CD8-positive, alpha-beta T cell (primary cell): ENCODE measurements at regions of chr14 and their contacts with region 1.

Region 1: DNA sequence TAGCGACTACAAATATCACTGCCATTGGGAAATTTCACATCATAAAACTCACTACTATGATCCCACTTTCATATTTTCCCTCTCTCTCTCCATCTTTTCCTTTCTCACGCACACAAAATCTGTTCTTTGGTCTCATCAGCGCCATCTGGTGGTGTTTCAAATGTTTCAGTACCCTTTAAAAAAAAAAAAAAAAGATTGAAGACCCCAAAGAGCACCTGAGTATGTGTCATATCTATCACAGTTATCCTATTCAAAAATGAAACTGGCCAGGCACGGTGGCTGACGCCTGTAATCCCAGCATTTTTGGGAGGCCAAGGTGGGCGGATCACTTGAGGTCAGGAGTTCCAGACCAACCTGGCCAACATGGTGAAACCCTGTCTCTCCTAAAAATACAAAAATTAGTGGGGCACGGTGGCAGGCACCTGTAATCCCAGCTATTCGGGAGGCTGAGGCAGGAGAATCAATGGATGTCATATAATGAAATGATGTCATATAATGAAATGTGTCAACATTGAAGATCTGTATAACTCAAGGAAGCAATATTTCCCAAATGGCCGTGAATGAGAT is 72.4 kb downstream of the TTC9 start:
- DNase-seq: peak in 8 of 9 experiments; percentile 29 to 82 (median 60)
- ATAC-seq: peak; percentile 36
- H3K4me3 ChIP-seq: no peak overlapping the region
- H3K4me3 Mint-ChIP-seq: no peak overlapping the region
- H3K27ac ChIP-seq: no peak overlapping the region
- H3K27ac Mint-ChIP-seq: no peak overlapping the region
- H3K4me1 ChIP-seq: peaks cover 3% of the 10 kb centered on the region
- H3K4me1 Mint-ChIP-seq: peaks cover 4% of the 10 kb centered on the region
- H3K27me3 ChIP-seq: no peaks in the 10 kb centered on the region
- H3K27me3 Mint-ChIP-seq: peaks cover 3% of the 10 kb centered on the region
- CTCF ChIP-seq: peak; percentile 95

Region 2: DNA sequence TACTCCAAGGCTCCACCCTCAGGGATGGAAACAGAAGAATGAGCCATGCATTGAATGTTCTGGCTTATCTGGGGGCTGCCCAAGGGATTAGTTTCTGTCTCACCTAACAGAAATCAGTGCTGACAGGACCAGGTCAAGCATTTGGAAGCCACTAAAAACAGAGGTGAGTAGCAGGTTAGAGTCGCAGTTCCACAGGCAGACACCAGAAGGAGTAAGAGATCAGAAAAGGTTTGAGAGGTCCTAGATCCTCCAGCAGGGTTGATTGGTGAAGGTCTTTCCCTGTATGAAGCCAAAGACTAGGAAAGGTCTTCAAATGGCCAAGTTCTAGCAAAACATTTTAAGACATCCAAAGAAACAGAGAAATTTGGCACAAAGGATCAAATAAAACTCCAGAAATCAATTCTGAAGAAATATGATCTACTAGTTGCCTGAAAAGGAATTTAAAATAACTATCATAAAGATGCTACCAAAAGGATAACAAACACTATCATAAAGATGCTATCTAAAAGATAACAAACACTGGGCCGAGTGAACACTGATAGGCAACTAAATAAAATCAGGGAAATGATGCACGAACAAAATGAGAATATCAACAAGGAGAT is 91.9 kb before region 1 on chr14:
- CTCF ChIA-PET with region 1: interaction called, 135 read pairs
- POLR2A ChIA-PET with region 1: interaction called, 3 read pairs
- intact Hi-C with region 1: loop called (anchors 1 kb)
- DNase-seq: peak in 8 of 9 experiments; percentile 31 to 73 (median 62)
- ATAC-seq: peak; percentile 96
- H3K4me3 ChIP-seq: no peak overlapping the region
- H3K4me3 Mint-ChIP-seq: no peak overlapping the region
- H3K27ac ChIP-seq: no peak overlapping the region
- H3K27ac Mint-ChIP-seq: no peak overlapping the region
- H3K4me1 ChIP-seq: no peaks in the 10 kb centered on the region
- H3K4me1 Mint-ChIP-seq: peaks cover 3% of the 10 kb centered on the region
- H3K27me3 ChIP-seq: peaks cover 0 to 2% of the 10 kb centered on the region in 2 experiments
- H3K27me3 Mint-ChIP-seq: no peaks in the 10 kb centered on the region
- CTCF ChIP-seq: peak; percentile 93

Region 3: DNA sequence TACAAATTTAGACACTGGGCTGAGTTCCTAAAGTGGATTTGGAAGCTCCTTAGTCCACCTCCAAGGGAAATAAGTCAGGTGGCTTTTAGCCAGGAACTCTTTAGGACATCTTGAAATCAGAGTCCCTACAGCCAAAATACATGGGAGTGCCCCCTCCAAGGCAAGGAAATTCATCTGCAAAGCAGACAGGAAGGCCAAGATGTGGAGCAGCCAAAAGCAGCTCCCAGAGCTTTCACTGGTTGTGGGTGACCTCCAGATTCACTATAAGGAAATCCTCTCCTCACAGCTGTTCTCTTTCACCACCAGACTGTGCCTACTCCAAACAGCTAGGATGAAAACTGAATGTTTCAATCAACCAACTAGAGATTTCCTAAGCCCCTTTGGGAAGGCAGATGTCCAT is 65.8 kb before region 1 on chr14:
- CTCF ChIA-PET with region 1: interaction called, 15 read pairs
- POLR2A ChIA-PET with region 1: interaction called, 3 read pairs
- intact Hi-C with region 1: no loop called
- DNase-seq: no peak
- ATAC-seq: no peak
- H3K4me3 ChIP-seq: no peak overlapping the region
- H3K4me3 Mint-ChIP-seq: no peak overlapping the region
- H3K27ac ChIP-seq: no peak overlapping the region
- H3K27ac Mint-ChIP-seq: peak overlapping the region; percentile 43
- H3K4me1 ChIP-seq: peaks cover 79% of the 10 kb centered on the region
- H3K4me1 Mint-ChIP-seq: peaks cover 90% of the 10 kb centered on the region
- H3K27me3 ChIP-seq: no peaks in the 10 kb centered on the region
- H3K27me3 Mint-ChIP-seq: no peaks in the 10 kb centered on the region
- CTCF ChIP-seq: no peak

Region 4: GRCh38 chr14:70660949-70661893 is 52.9 kb before region 1 on chr14:
- CTCF ChIA-PET with region 1: interaction called, 38 read pairs
- POLR2A ChIA-PET with region 1: interaction called, 3 read pairs
- intact Hi-C with region 1: loop called (anchors 1 to 2 kb)
- DNase-seq: peak; percentile 25 to 84 (median 65)
- ATAC-seq: peak; percentile 76
- H3K4me3 ChIP-seq: peak overlapping the region in 1 of 2 experiments; percentile 18
- H3K4me3 Mint-ChIP-seq: peak overlapping the region; percentile 78
- H3K27ac ChIP-seq: peak overlapping the region; percentile 44 to 50
- H3K27ac Mint-ChIP-seq: peak overlapping the region; percentile 89
- H3K4me1 ChIP-seq: peaks cover 87% of the 10 kb centered on the region
- H3K4me1 Mint-ChIP-seq: peaks cover 92% of the 10 kb centered on the region
- H3K27me3 ChIP-seq: no peaks in the 10 kb centered on the region
- H3K27me3 Mint-ChIP-seq: no peaks in the 10 kb centered on the region
- CTCF ChIP-seq: no peak

Region 5: GRCh38 chr14:70809543-70810244 is 95.6 kb after region 1 on chr14:
- CTCF ChIA-PET with region 1: interaction called, 3 read pairs
- POLR2A ChIA-PET with region 1: no interaction called
- intact Hi-C with region 1: loop called in 1 of 2 experiments (anchors 2 kb)
- DNase-seq: peak; percentile 70 to 95 (median 87)
- ATAC-seq: peak; percentile 79
- H3K4me3 ChIP-seq: peak overlapping the region; percentile 58 to 65
- H3K4me3 Mint-ChIP-seq: no peak overlapping the region
- H3K27ac ChIP-seq: peak overlapping the region; percentile 30 to 56
- H3K27ac Mint-ChIP-seq: peak overlapping the region; percentile 80
- H3K4me1 ChIP-seq: peaks cover 12% of the 10 kb centered on the region
- H3K4me1 Mint-ChIP-seq: peaks cover 10% of the 10 kb centered on the region
- H3K27me3 ChIP-seq: no peaks in the 10 kb centered on the region
- H3K27me3 Mint-ChIP-seq: no peaks in the 10 kb centered on the region
- CTCF ChIP-seq: no peak

Region 6: DNA sequence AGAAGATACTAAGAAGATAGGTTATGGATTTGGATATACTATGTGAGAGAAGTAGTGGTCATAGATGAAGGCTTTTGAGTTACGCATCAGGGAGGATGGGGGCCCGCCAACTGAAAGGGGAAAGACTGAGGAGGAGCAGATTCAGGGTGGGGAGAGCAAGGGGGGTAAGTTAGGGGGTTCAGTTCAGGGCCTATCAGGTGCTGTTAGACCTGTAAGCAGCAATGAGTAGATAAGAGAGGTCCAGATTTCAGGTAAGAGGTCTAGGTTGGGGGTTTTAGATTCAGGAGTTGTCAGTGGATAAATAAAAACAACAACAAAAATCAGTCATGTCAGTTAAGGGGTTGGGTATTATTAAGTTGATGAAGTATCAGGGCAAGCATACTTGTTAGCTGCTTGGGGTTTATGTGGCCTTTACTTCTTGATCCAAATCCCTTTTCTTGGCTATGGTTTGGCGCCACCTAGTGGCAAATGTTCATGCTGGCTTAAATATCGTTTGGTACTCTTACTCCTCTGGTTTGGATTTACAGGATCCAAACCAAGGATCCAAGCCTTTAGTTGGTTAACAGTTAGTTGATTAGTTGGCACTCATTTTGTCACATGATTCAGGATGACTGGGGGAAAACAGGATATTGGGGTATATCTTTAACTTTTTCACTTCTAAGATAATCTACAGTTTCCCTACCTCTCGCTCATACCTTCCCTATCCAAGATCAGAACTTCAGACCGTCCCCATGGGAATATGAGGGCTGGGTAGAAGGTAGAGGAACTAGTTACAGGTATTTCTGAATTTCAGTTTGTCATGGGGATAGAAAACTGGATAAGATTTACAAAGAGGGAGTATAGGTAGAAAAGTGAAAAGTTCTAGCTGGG is 258.2 kb after region 1 on chr14:
- CTCF ChIA-PET with region 1: interaction called, 3 read pairs
- POLR2A ChIA-PET with region 1: no interaction called
- intact Hi-C with region 1: loop called (anchors 10 kb)
- DNase-seq: peak; percentile 65 to 90 (median 85)
- ATAC-seq: peak; percentile 81
- H3K4me3 ChIP-seq: no peak overlapping the region
- H3K4me3 Mint-ChIP-seq: no peak overlapping the region
- H3K27ac ChIP-seq: peak overlapping the region in 1 of 2 experiments; percentile 0
- H3K27ac Mint-ChIP-seq: peak overlapping the region; percentile 53
- H3K4me1 ChIP-seq: peaks cover 25% of the 10 kb centered on the region
- H3K4me1 Mint-ChIP-seq: peaks cover 48% of the 10 kb centered on the region
- H3K27me3 ChIP-seq: no peaks in the 10 kb centered on the region
- H3K27me3 Mint-ChIP-seq: no peaks in the 10 kb centered on the region
- CTCF ChIP-seq: peak; percentile 81